Activated CD4-positive, alpha-beta memory T cell treated with anti-CD3 and anti-CD28 coated beads for 36 hours (primary cell): ENCODE measurements at regions of chr15 and their contacts with region 1.

Region 1: DNA sequence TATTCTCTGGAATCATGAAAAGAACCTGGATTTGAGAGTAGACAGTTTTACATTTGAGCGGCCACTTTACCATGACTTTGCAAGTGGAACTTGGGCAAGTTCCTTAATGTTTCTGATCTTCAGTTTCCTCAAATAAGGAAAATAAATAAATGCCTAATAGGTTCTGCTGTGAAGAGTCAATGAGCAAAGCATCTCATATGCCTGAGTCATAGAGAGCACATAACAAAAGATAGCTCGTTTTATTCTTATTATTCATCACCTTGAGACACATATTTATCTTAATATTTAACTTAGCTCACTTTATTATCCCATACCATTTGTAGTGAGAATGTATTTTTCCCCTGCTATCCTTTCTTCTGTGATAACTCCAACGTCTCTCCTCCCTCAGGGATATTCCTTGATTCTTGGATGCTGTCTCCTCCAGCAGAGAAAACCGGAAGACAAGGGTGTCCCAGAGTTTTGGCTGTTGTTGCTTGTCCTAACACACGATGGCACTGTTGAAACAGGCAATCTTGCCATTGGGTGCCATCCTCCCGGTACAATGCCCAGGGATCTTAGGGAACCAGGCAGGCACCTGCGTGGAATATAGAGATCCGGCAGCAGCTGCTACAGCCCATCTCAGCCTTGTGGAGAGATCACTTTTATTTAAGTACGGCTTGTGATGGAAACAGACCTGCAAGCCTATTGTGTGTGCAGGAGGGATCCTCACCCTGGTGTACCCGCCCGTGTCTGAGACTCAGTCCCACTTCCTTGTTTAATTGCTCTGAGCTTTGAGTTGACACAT is 33.3 kb upstream of the VPS33B start:
- DNase-seq: peak; percentile 49
- H3K4me3 Mint-ChIP-seq: no peak overlapping the region
- H3K27ac Mint-ChIP-seq: no peak overlapping the region
- H3K4me1 Mint-ChIP-seq: no peaks in the 10 kb centered on the region
- H3K27me3 Mint-ChIP-seq: peaks cover 42% of the 10 kb centered on the region

Region 2: GRCh38 chr15:91224755-91225380 is 169.1 kb after region 1 on chr15:
- CTCF ChIA-PET with region 1: interaction called, 34 read pairs
- POLR2A ChIA-PET with region 1: no interaction called
- intact Hi-C with region 1: loop called (anchors 1 kb)
- DNase-seq: no peak
- H3K4me3 Mint-ChIP-seq: no peak overlapping the region
- H3K27ac Mint-ChIP-seq: no peak overlapping the region
- H3K4me1 Mint-ChIP-seq: no peaks in the 10 kb centered on the region
- H3K27me3 Mint-ChIP-seq: peaks cover 21% of the 10 kb centered on the region

Region 3: DNA sequence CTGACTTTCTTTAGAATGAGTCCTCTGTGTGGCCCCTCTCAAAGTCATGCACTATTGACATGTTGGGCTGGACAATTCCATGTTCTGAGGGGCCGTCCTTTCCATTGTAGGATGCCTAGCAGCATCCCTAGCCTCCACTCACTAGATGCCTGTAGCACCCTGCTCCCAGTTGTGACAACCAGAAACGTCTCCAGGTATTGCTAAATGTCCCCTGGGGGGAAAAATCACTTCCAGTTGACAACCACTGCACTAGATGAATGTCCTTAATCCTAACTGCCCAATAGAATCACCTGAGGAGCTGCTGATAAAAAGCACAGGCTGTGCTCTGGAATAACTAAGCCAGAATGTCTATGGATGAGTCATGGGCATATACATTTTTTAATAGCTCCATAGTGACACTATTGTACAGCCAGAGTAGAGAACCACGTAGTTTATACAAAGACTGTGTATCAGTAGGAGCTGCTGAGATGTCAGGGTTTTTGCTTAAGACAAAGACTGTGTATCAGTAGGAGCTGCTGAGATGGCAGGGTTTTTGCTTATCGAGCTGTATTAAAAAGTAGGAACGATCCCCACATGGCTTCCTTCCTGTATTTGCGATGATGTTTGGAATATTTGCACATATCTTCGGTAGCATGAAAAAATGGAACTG is 181.6 kb after region 1 on chr15:
- CTCF ChIA-PET with region 1: interaction called, 13 read pairs
- POLR2A ChIA-PET with region 1: no interaction called
- intact Hi-C with region 1: no loop called
- DNase-seq: no peak
- H3K4me3 Mint-ChIP-seq: no peak overlapping the region
- H3K27ac Mint-ChIP-seq: no peak overlapping the region
- H3K4me1 Mint-ChIP-seq: no peaks in the 10 kb centered on the region
- H3K27me3 Mint-ChIP-seq: peaks cover 15% of the 10 kb centered on the region

Region 4: DNA sequence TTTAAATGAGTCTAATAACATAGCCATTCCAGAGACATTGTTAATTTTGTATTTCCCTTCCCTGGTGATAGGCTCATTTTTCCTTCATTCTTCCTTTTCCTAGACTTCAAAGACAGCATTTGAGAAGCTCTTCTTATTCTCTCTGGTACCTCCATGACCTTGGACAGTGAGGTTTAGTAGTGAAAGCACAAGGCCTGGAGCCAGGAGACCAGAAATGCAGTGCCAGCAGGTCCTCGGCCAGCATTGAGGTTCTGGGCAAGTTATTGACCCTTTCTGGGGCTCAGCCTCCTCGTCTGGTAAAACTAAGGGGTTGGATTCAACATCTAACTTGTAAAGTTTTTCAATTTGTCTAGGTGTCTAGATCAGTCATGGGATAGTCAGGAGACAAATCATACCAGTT is 191.3 kb after region 1 on chr15:
- CTCF ChIA-PET with region 1: interaction called, 13 read pairs
- POLR2A ChIA-PET with region 1: no interaction called
- intact Hi-C with region 1: no loop called
- DNase-seq: no peak
- H3K4me3 Mint-ChIP-seq: no peak overlapping the region
- H3K27ac Mint-ChIP-seq: no peak overlapping the region
- H3K4me1 Mint-ChIP-seq: no peaks in the 10 kb centered on the region
- H3K27me3 Mint-ChIP-seq: peaks cover 9% of the 10 kb centered on the region